Activated CD8-positive, alpha-beta T cell treated with anti-CD3 and anti-CD28 coated beads, Interleukin-2, amount 10 ng/mL, durations not matched to agents 7 days and 5 days (primary cell): ENCODE measurements at regions of chr1 and their contacts with region 1.

Region 1: GRCh38 chr1:225467193-225468020 is 39.6 kb upstream of the LBR start:
- DNase-seq: peak; percentile 93
- ATAC-seq: peak; percentile 90
- H3K4me3 Mint-ChIP-seq: peak overlapping the region; percentile 91
- H3K27ac Mint-ChIP-seq: peak overlapping the region; percentile 97
- H3K4me1 Mint-ChIP-seq: peaks cover 58% of the 10 kb centered on the region
- H3K27me3 Mint-ChIP-seq: no peaks in the 10 kb centered on the region

Region 2: GRCh38 chr1:225388372-225388771 is 79.0 kb before region 1 on chr1:
- CTCF ChIA-PET with region 1: no interaction called
- POLR2A ChIA-PET with region 1: no interaction called
- DNase-seq: no peak
- ATAC-seq: no peak
- H3K4me3 Mint-ChIP-seq: no peak overlapping the region
- H3K27ac Mint-ChIP-seq: no peak overlapping the region
- H3K4me1 Mint-ChIP-seq: peaks cover 6% of the 10 kb centered on the region
- H3K27me3 Mint-ChIP-seq: no peaks in the 10 kb centered on the region

Region 3: GRCh38 chr1:225428068-225428880 is 39.1 kb before region 1 on chr1:
- CTCF ChIA-PET with region 1: interaction called, 23 read pairs
- POLR2A ChIA-PET with region 1: interaction called, 88 read pairs
- DNase-seq: peak; percentile 94
- ATAC-seq: peak; percentile 92
- H3K4me3 Mint-ChIP-seq: peak overlapping the region; percentile 90
- H3K27ac Mint-ChIP-seq: peak overlapping the region; percentile 95
- H3K4me1 Mint-ChIP-seq: peaks cover 48% of the 10 kb centered on the region
- H3K27me3 Mint-ChIP-seq: no peaks in the 10 kb centered on the region

Region 4: GRCh38 chr1:225441314-225442122 is 25.9 kb before region 1 on chr1:
- CTCF ChIA-PET with region 1: interaction called, 27 read pairs
- POLR2A ChIA-PET with region 1: interaction called, 135 read pairs
- DNase-seq: no peak
- ATAC-seq: no peak
- H3K4me3 Mint-ChIP-seq: peak overlapping the region; percentile 55
- H3K27ac Mint-ChIP-seq: peak overlapping the region; percentile 75
- H3K4me1 Mint-ChIP-seq: peaks cover 54% of the 10 kb centered on the region
- H3K27me3 Mint-ChIP-seq: no peaks in the 10 kb centered on the region

Region 5: GRCh38 chr1:225454733-225455132 is 12.7 kb before region 1 on chr1:
- CTCF ChIA-PET with region 1: no interaction called
- POLR2A ChIA-PET with region 1: interaction called, 19 read pairs
- DNase-seq: no peak
- ATAC-seq: peak; percentile 81
- H3K4me3 Mint-ChIP-seq: no peak overlapping the region
- H3K27ac Mint-ChIP-seq: no peak overlapping the region
- H3K4me1 Mint-ChIP-seq: peaks cover 40% of the 10 kb centered on the region
- H3K27me3 Mint-ChIP-seq: no peaks in the 10 kb centered on the region

Region 6: GRCh38 chr1:225498549-225499136 is 31.2 kb after region 1 on chr1:
- CTCF ChIA-PET with region 1: no interaction called
- POLR2A ChIA-PET with region 1: no interaction called
- DNase-seq: no peak
- ATAC-seq: no peak
- H3K4me3 Mint-ChIP-seq: no peak overlapping the region
- H3K27ac Mint-ChIP-seq: no peak overlapping the region
- H3K4me1 Mint-ChIP-seq: no peaks in the 10 kb centered on the region
- H3K27me3 Mint-ChIP-seq: peaks cover 15% of the 10 kb centered on the region

Region 7: GRCh38 chr1:225923692-225924555 is 456.5 kb after region 1 on chr1 and contains the start of gene PYCR2:
- CTCF ChIA-PET with region 1: no interaction called
- POLR2A ChIA-PET with region 1: interaction called, 23 read pairs
- DNase-seq: peak; percentile 96
- ATAC-seq: peak; percentile 98
- H3K4me3 Mint-ChIP-seq: peak within 1 kb of the TSS; percentile 97
- H3K27ac Mint-ChIP-seq: peak within 1 kb of the TSS; percentile 97
- H3K4me1 Mint-ChIP-seq: peaks cover 65% of the 10 kb centered on the region
- H3K27me3 Mint-ChIP-seq: no peaks in the 10 kb centered on the region
- total RNA-seq, gene PYCR2: 122 to 126 TPM

Region 8: GRCh38 chr1:225987491-225988316 is 520.3 kb after region 1 on chr1:
- CTCF ChIA-PET with region 1: interaction called, 14 read pairs
- POLR2A ChIA-PET with region 1: interaction called, 4 read pairs
- DNase-seq: no peak
- ATAC-seq: no peak
- H3K4me3 Mint-ChIP-seq: no peak overlapping the region
- H3K27ac Mint-ChIP-seq: no peak overlapping the region
- H3K4me1 Mint-ChIP-seq: peaks cover 32% of the 10 kb centered on the region
- H3K27me3 Mint-ChIP-seq: no peaks in the 10 kb centered on the region

Region 9: GRCh38 chr1:225999227-225999911 is 532.0 kb after region 1 on chr1 and contains the start of gene SDE2:
- CTCF ChIA-PET with region 1: no interaction called
- POLR2A ChIA-PET with region 1: interaction called, 25 read pairs
- DNase-seq: peak; percentile 100
- ATAC-seq: peak; percentile 77
- H3K4me3 Mint-ChIP-seq: peak within 1 kb of the TSS; percentile 100
- H3K27ac Mint-ChIP-seq: peak within 1 kb of the TSS; percentile 100
- H3K4me1 Mint-ChIP-seq: peaks cover 78% of the 10 kb centered on the region
- H3K27me3 Mint-ChIP-seq: no peaks in the 10 kb centered on the region
- total RNA-seq, gene SDE2: 15.4 to 16.9 TPM